ENCODE measurements at regions of chr1 and their contacts with region 1.

Region 1: DNA sequence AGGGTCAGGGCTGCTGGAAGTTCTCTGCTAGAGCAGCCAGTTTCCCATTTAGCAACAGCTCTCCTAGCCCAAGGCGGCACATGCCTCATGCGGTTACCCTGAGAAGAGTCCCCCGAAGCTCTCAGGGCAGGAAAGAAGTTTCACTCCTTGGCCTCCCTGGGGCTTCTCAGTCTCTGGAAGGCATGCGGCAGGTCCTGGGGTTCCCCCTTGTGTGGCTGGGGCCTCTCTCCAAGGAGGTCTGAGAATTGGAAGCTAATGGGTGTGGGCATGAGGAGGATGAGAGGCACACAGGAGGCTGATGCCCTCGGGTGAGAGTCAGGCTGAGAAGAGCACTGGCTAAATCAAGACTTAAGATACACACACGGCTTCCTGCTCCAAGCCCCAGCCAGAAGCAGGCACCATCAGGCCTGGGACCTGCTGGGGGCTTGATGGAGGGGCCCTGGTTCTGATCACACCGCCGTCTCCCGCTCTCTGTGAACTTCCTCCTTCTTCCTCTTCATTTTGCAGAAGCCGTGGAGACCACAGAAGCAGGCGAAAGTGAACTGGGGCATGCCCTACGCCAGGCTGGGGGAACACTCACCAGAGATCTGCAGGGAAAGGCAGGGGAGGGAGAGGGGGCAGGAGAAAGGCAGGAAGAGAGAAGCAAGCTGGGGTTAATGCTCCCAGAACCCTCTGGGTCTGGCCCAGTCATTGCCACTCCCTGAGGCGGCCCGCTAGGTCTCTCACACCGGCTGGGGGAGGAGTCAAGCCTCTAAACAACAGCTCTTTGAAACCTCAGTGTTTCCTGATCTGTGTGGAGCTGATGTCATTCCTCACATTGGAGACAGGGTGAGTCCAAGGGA is 15.1 kb downstream of the BLACAT1 start:
- DNase-seq: peak; percentile 83
- H3K4me3 Mint-ChIP-seq: peak overlapping the region; percentile 72
- H3K27ac Mint-ChIP-seq: peak overlapping the region; percentile 88
- H3K4me1 Mint-ChIP-seq: peaks cover 26% of the 10 kb centered on the region
- H3K27me3 Mint-ChIP-seq: no peaks in the 10 kb centered on the region

Region 2: DNA sequence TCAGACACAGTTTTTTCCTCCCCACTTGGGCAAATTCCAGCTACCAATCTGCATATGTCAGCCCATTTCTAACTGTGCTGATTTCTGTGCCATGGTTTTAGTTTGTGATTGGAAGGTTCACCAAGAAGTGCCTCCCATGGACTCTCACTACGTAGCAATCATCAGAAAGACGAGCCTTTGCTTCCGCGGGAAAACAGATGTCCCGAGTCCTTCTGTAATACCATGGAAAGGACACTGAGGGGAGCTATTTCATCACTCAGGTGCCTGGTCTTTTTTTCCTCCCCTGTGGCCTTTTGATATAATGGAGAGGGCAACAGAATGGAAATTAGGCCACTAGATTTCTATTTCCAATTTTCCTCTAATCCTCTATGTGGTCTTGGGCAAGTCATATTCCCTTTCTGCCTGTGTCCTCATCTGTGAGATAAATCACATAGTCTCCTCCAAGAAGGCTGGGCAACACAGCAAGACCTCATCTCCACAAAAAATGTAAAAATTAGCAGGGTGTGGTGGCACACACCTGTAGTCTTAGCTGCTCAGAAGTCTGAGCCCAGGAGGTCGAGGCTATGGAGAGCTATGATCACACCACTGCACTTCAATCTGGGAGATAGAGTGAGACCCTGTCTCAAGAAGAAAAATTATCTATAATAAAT is 43.6 kb before region 1 on chr1:
- CTCF ChIA-PET with region 1: interaction called, 13 read pairs
- POLR2A ChIA-PET with region 1: no interaction called
- DNase-seq: no peak
- H3K4me3 Mint-ChIP-seq: no peak overlapping the region
- H3K27ac Mint-ChIP-seq: no peak overlapping the region
- H3K4me1 Mint-ChIP-seq: no peaks in the 10 kb centered on the region
- H3K27me3 Mint-ChIP-seq: peaks cover 30% of the 10 kb centered on the region